ENCODE measurements at regions of chr17 and their contacts with region 1.

Region 1: GRCh38 chr17:9802305-9803096 is 11.1 kb upstream of the DHRS7C start:
- DNase-seq: no peak
- ATAC-seq: peak; percentile 20 to 76 (median 58)
- H3K4me3 ChIP-seq: no peak overlapping the region
- H3K27ac ChIP-seq: peak overlapping the region in 1 of 10 donors; percentile 58
- H3K4me1 ChIP-seq: peaks cover 0 to 5% (median 0%) of the 10 kb centered on the region in 9 donors
- H3K27me3 ChIP-seq: peaks cover 0 to 62% (median 42%) of the 10 kb centered on the region in 7 donors
- CTCF ChIP-seq: peak in 3 of 9 donors; percentile 20 to 24 (median 20)

Region 2: GRCh38 chr17:9880582-9880999 is 78.1 kb after region 1 on chr17:
- intact Hi-C with region 1: loop called in 2 of 10 experiments (anchors 10 kb)
- DNase-seq: no peak
- ATAC-seq: peak in 3 of 8 donors; percentile 39 to 98 (median 73)
- H3K4me3 ChIP-seq: no peak overlapping the region
- H3K27ac ChIP-seq: no peak overlapping the region
- H3K4me1 ChIP-seq: peaks cover 0 to 17% (median 0%) of the 10 kb centered on the region in 9 donors
- H3K27me3 ChIP-seq: peaks cover 0 to 4% (median 0%) of the 10 kb centered on the region in 7 donors
- CTCF ChIP-seq: no peak

Region 3: GRCh38 chr17:11705111-11705510 is 1902.6 kb after region 1 on chr17:
- intact Hi-C with region 1: no loop called
- DNase-seq: no peak
- ATAC-seq: peak in 5 of 8 donors; percentile 35 to 57 (median 38)
- H3K4me3 ChIP-seq: peak overlapping the region in 3 of 10 donors; percentile 16 to 28 (median 17)
- H3K27ac ChIP-seq: no peak overlapping the region
- H3K4me1 ChIP-seq: peaks cover 0 to 3% (median 0%) of the 10 kb centered on the region in 9 donors
- H3K27me3 ChIP-seq: no peaks in the 10 kb centered on the region
- CTCF ChIP-seq: no peak